Left ventricle myocardium inferior (tissue), 1 donor: ENCODE measurements at regions of chr2 and their contacts with region 1.

Region 1: GRCh38 chr2:123870206-123870880 is 154.7 kb upstream of the CNTNAP5 start:
- DNase-seq: no peak
- H3K4me3 ChIP-seq: no peak overlapping the region
- H3K27ac ChIP-seq: no peak overlapping the region
- H3K4me1 ChIP-seq: no peaks in the 10 kb centered on the region
- H3K27me3 ChIP-seq: no peaks in the 10 kb centered on the region
- CTCF ChIP-seq: no peak

Region 2: GRCh38 chr2:123116595-123116994 is 753.7 kb before region 1 on chr2:
- intact Hi-C with region 1: loop called (anchors 10 kb)
- DNase-seq: no peak
- H3K4me3 ChIP-seq: no peak overlapping the region
- H3K27ac ChIP-seq: no peak overlapping the region
- H3K4me1 ChIP-seq: no peaks in the 10 kb centered on the region
- H3K27me3 ChIP-seq: no peaks in the 10 kb centered on the region
- CTCF ChIP-seq: no peak

Region 3: GRCh38 chr2:124325667-124326440 is 455.5 kb after region 1 on chr2:
- intact Hi-C with region 1: no loop called
- DNase-seq: no peak
- H3K4me3 ChIP-seq: no peak overlapping the region
- H3K27ac ChIP-seq: no peak overlapping the region
- H3K4me1 ChIP-seq: no peaks in the 10 kb centered on the region
- H3K27me3 ChIP-seq: peaks cover 3% of the 10 kb centered on the region
- CTCF ChIP-seq: no peak